ENCODE measurements at regions of chr1 and their contacts with region 1.

Region 1: DNA sequence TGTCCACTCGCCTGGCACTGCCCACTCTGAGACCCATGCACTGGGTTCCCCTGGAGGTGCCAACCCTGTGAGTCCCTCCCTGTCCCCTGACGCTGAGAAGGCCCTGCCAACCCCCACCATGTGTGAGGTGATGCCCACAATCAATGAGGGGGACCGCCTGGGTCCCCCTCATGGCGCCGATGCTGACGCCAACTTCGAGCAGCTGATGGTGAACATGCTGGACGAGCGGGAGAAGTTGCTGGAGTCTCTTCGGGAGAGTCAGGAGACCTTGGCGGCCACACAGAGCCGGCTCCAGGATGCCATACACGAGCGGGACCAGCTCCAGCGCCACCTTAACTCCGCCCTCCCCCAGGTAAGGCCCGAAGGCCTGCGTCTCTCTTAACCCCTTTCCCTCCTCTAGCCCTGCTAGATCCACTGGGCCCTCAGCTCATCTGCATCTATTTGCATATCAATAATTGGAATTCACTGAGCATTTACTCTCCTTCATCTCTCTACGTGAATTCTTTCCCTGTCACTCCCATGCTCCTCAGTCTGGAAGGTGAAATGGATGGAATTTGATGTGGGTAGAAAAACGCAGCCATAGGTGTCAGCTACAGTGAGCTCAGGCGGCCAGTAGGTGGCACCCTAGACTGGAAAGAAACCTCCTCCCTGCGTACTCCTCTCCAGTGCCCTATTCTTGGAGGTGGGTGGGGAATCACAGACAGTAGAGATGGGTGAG is 12.8 kb downstream of the PPFIA4 start:
- DNase-seq: peak; percentile 80
- ATAC-seq: peak; percentile 84
- H3K4me3 Mint-ChIP-seq: no peak overlapping the region
- H3K27ac Mint-ChIP-seq: no peak overlapping the region
- H3K4me1 Mint-ChIP-seq: peaks cover 26% of the 10 kb centered on the region
- H3K27me3 Mint-ChIP-seq: no peaks in the 10 kb centered on the region; the same call in 1 of the 2 replicates
- CTCF ChIP-seq: peak; percentile 54

Region 2: DNA sequence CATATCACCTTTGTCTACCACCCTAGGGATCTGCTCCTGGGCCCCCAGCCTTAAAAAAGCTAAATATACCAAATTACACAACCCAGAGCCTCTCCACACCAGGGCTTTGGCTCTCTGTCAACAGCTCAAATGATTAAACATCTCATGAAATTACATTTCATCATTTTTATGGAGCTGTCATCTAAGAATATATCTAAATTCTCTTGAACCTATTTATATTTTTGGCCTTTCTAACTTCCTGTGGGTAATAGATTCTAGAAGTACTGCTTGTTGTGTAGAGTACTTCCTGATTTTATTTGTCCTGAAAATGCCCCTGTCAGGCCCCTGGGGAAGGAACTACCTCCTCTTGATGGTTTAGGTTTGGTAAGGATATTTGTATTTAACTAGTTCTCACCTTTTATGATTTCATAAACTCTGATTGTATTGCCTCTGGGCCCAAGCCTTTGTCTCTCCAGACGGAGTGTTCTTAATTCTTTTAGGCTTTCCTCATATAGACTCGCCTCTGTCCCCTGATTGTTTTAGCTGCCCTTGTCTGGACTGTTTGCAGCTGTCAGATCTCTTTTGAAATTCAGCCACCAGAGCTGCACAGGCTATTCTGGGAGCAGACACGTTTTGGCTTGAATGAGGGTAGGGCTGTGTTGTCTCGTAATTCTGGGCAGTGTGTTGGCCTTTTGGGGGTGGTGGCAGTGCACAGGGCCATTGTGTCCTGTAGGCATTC is 30.1 kb after region 1 on chr1:
- CTCF ChIA-PET with region 1: interaction called, 121 read pairs
- POLR2A ChIA-PET with region 1: no interaction called
- DNase-seq: no peak
- ATAC-seq: no peak
- H3K4me3 Mint-ChIP-seq: no peak overlapping the region
- H3K27ac Mint-ChIP-seq: no peak overlapping the region
- H3K4me1 Mint-ChIP-seq: peaks cover 9% of the 10 kb centered on the region
- H3K27me3 Mint-ChIP-seq: peaks cover 2% of the 10 kb centered on the region; the same call in 1 of the 2 replicates
- CTCF ChIP-seq: no peak

Region 3: GRCh38 chr1:203117611-203118575 is 78.8 kb after region 1 on chr1:
- CTCF ChIA-PET with region 1: interaction called, 116 read pairs
- POLR2A ChIA-PET with region 1: interaction called, 5 read pairs
- DNase-seq: peak; percentile 95
- ATAC-seq: peak; percentile 100
- H3K4me3 Mint-ChIP-seq: peak overlapping the region; percentile 47
- H3K27ac Mint-ChIP-seq: no peak overlapping the region
- H3K4me1 Mint-ChIP-seq: no peaks in the 10 kb centered on the region; the same call in 1 of the 2 replicates
- H3K27me3 Mint-ChIP-seq: peaks cover 17% of the 10 kb centered on the region
- CTCF ChIP-seq: peak; percentile 66

Region 4: DNA sequence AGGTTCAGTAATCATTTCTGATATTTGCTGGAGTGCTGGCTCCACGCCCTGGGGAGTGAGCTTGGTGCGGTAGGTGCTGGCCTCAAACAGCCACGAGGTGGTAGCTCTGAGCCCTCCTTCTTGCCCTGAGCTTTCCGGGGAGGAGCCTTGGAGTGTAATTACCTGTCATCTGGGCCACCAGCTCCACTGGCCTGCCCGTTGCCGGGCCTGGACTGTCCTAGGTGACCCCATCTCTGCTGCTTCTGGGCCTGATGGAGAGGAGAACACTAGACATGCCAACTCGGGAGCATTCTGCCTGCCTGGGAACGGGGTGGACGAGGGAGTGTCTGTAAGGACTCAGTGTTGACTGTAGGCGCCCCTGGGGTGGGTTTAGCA is 127.5 kb after region 1 on chr1:
- CTCF ChIA-PET with region 1: interaction called, 78 read pairs
- POLR2A ChIA-PET with region 1: no interaction called
- DNase-seq: no peak
- ATAC-seq: peak; percentile 76
- H3K4me3 Mint-ChIP-seq: no peak overlapping the region
- H3K27ac Mint-ChIP-seq: no peak overlapping the region
- H3K4me1 Mint-ChIP-seq: peaks cover 3% of the 10 kb centered on the region; the same call in 1 of the 2 replicates
- H3K27me3 Mint-ChIP-seq: no peaks in the 10 kb centered on the region; the same call in 1 of the 2 replicates
- CTCF ChIP-seq: no peak

Region 5: GRCh38 chr1:203206129-203206687 is 167.2 kb after region 1 on chr1:
- CTCF ChIA-PET with region 1: interaction called, 10 read pairs
- POLR2A ChIA-PET with region 1: no interaction called
- DNase-seq: no peak
- ATAC-seq: no peak
- H3K4me3 Mint-ChIP-seq: no peak overlapping the region
- H3K27ac Mint-ChIP-seq: no peak overlapping the region
- H3K4me1 Mint-ChIP-seq: no peaks in the 10 kb centered on the region
- H3K27me3 Mint-ChIP-seq: peaks cover 1% of the 10 kb centered on the region; the same call in 1 of the 2 replicates
- CTCF ChIP-seq: no peak

Region 6: DNA sequence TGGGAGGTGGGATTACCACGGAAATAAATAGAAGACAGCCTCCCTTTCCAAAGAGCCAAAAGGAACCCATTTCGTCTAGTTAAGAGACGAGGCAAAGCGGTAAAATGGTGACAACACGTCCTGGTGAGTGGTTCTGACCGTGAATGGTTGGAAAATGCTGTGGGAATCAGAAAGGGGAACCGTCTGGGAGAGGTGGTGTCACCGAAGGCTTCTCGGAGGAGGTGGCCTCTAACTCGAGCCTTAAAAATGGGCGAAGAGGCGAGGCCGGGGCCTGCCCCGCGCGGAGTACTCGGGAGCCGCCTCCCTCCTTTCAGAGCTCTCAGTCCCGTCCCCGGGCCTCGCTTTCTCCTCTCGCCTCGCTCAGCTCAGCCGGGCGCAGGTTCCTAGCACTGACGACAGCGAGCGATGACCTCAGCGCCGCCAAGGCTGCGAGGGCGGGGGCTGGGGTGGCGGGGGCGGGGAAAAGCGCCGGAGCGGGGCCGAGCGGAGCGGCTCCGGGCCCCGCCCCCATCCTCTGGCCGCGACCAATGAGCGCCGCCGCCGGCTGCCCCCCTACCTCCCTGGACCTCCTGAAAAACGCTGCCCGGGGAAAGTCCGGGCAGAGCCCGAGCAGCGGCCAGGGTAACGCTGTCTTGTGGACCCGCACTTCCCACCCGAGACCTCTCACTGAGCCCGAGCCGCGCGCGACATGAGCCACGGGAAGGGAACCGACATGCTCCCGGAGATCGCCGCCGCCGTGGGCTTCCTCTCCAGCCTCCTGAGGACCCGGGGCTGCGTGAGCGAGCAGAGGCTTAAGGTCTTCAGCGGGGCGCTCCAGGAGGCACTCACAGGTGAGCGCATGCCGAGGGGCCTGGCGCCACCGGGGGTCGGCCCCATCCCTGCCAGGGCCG is 266.1 kb after region 1 on chr1 and contains the start of gene BTG2:
- CTCF ChIA-PET with region 1: interaction called, 13 read pairs
- POLR2A ChIA-PET with region 1: no interaction called
- DNase-seq: peak; percentile 84
- ATAC-seq: peak; percentile 80
- H3K4me3 Mint-ChIP-seq: peak within 1 kb of the TSS; percentile 79
- H3K27ac Mint-ChIP-seq: no peak within 1 kb of the TSS
- H3K4me1 Mint-ChIP-seq: peaks cover 55% of the 10 kb centered on the region
- H3K27me3 Mint-ChIP-seq: peaks cover 96% of the 10 kb centered on the region
- CTCF ChIP-seq: no peak
- total RNA-seq, gene BTG2: 13.5 to 19.4 TPM (median 15.4 TPM) in 3 replicates